Tibial artery (tissue), 4 donors: ENCODE measurements at regions of chr1 and their contacts with region 1.

Region 1: GRCh38 chr1:32107742-32108661 is at the start of gene KPNA6:
- DNase-seq: peak; percentile 88 to 95
- H3K4me3 ChIP-seq: peak within 1 kb of the TSS; percentile 79 to 86
- H3K27ac ChIP-seq: peak within 1 kb of the TSS; percentile 86 to 90
- H3K4me1 ChIP-seq: peaks cover 0 to 48% (median 35%) of the 10 kb centered on the region in 4 donors
- H3K27me3 ChIP-seq: no peaks in the 10 kb centered on the region
- CTCF ChIP-seq: no peak

Region 2: DNA sequence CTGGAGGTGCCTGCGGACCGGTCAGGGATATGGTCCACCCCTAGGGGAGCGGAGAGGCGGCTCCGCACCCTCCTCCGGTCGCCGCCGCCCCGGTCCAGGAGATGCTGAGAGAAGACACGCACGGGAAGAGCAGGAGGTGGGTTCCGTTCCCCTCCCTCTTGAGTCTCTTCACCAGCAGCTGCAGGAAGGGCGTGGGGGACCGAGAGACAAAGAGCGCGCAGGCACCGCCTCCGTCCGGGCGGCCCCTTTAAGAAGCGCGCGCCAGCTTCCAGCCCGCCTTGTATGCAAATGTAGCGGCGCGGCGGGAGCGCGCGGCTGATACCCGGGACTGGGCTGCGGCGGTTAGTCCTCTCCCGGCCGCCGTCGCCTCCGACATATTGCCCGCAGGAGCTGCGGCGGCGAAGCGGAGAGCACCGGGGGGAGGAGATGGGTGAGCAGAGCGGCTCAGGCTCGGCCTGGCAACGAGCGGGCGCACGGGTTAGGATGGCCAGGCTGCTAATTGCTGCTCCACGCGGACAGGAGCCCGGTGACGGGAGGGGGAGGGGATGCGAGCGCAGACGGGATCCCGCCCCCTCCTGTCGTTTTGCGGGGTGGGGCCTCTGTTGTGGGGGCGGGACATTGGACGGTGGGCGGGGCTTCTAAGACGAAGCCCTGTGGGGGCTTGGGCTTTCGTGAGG is 35.2 kb before region 1 on chr1 and contains the start of gene TMEM39B:
- intact Hi-C with region 1: loop called (anchors 5 kb)
- DNase-seq: peak; percentile 96 to 97
- H3K4me3 ChIP-seq: peak within 1 kb of the TSS; percentile 66 to 72
- H3K27ac ChIP-seq: peak within 1 kb of the TSS; percentile 84 to 89
- H3K4me1 ChIP-seq: peaks cover 0 to 29% (median 21%) of the 10 kb centered on the region in 4 donors
- H3K27me3 ChIP-seq: no peaks in the 10 kb centered on the region
- CTCF ChIP-seq: peak; percentile 23 to 36

Region 3: DNA sequence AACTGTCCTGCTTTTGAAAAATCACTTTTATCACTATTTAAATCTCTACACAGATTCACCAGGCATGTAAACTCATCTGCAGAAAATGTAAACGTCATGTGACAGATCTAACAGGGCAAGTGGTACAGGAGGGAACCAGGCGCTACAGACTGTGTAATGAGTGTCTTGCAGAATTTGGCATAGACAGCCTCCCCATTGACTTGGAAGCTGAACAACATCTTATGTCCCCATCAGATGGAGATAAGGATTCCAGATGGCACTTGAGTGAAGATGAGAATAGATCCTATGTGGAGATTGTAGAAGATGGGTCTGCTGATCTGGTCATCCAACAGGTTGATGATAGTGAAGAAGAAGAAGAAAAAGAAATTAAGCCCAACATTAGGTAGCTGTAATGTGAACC is 492.0 kb after region 1 on chr1:
- intact Hi-C with region 1: no loop called
- DNase-seq: no peak
- H3K4me3 ChIP-seq: no peak overlapping the region
- H3K27ac ChIP-seq: no peak overlapping the region
- H3K4me1 ChIP-seq: no peaks in the 10 kb centered on the region
- H3K27me3 ChIP-seq: no peaks in the 10 kb centered on the region
- CTCF ChIP-seq: no peak

Region 4: DNA sequence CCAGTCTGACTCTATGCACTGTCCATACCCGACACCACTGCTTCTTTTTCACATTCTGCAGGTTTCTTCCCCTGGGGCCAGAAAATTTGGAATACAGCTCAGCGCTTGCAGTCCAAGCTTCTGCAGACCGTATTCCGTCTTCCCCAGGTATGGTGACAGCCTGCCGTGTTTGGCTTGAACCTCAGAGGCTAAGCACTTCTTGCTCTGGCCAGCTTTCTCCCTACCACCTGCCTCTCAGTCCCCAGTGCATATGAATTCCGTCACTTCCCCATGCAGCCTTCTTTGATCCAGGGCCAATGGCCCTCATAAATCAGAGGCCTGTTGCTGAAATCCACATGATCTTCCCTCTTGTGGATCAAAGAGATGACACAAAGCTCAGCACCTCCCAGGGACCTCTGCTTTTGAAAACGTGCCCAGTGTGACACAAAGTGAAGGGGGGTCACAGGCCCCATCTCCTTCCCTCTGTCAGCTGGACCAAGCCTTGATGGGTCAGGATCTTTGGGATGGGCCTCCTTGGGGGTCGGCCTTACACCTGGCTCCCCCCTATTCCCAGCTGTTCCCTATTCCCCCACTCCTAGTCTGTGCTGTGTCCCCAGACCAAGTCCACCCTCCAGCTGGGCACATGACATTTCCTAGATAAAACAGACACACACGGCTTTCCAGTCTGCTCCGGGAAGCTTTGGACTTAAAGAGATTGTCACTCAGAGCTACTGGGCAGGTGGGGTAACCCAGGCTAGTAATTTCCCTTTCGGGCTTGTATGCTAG is 1822.5 kb after region 1 on chr1:
- intact Hi-C with region 1: loop called (anchors 10 kb)
- DNase-seq: no peak
- H3K4me3 ChIP-seq: no peak overlapping the region
- H3K27ac ChIP-seq: no peak overlapping the region
- H3K4me1 ChIP-seq: no peaks in the 10 kb centered on the region
- H3K27me3 ChIP-seq: peaks cover 0 to 8% of the 10 kb centered on the region in 2 donors
- CTCF ChIP-seq: no peak